Thyroid gland (tissue), 4 donors: ENCODE measurements at regions of chr12 and their contacts with region 1.

Region 1: DNA sequence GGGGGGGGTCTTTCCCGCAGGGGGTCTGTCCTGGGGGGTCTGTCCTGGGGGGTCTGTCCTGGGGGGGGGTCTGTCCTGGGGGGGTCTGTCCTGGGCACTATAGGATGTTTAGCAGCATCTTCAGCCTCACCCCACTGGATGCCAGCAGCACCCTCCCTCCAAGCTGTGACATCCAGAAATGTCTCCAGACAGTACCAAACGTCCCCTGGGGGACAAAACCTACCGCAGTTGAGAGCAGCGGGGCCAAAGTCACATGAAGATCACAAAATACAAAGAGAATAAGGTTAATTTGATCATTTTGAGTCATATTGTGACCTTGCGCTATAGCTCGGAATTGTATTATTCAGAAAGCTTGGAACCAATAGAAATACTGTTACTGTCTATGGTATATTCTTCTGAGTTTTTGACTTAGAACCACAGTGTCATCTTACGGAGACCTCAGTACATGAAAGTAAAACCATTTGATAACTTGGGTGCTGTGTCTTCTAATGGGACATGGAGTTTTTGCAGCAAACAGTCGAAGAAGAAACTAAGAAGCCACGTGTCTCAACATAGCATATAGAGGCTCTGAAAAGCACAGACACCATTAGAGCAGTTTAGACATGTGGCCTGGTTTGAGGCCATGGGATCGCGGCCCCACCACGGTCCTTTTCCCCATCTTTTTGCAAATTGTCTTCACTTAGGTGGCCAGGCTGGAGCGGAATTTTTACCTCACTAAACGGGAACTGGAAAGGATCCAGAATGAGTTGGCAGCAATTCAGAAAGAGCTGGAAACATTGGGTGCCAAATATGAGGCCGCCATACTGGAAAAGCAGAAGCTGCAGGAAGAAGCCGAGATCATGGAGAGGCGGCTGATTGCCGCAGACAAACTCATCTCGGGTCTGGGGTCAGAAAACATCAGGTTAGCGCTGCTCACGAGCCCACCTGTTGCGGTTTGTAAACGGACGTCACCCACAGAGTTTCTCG is 59.9 kb downstream of the CCDC92 start:
- DNase-seq: no peak
- H3K4me3 ChIP-seq: no peak overlapping the region
- H3K27ac ChIP-seq: no peak overlapping the region
- H3K4me1 ChIP-seq: no peaks in the 10 kb centered on the region
- H3K27me3 ChIP-seq: no peaks in the 10 kb centered on the region
- CTCF ChIP-seq: no peak
- POLR2A ChIP-seq: no peak

Region 2: DNA sequence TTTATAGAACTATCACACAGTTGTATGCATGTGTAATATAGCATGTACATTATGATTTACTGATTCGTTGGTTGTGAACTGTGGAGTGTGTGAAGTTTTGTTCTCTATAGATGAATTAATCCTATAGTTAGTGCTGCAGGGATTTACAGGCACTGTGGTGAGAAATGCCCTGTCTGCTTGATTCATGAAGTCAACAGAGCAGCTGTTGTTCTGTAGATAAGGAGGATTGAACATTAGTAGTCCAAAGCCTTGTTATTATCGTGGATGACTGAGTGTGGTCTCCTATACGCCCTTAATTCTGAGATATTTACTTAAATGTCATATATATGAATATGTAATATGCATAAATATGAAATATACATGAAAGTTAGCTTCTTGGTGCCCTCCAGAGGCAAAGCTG is 52.3 kb before region 1 on chr12:
- intact Hi-C with region 1: no loop called
- DNase-seq: no peak
- H3K4me3 ChIP-seq: no peak overlapping the region
- H3K27ac ChIP-seq: no peak overlapping the region
- H3K4me1 ChIP-seq: no peaks in the 10 kb centered on the region
- H3K27me3 ChIP-seq: no peaks in the 10 kb centered on the region
- CTCF ChIP-seq: no peak
- POLR2A ChIP-seq: no peak

Region 3: GRCh38 chr12:124026755-124027745 is 114.4 kb after region 1 on chr12:
- intact Hi-C with region 1: loop called (anchors 5 kb)
- DNase-seq: no peak
- H3K4me3 ChIP-seq: no peak overlapping the region
- H3K27ac ChIP-seq: no peak overlapping the region
- H3K4me1 ChIP-seq: peaks cover 0 to 5% of the 10 kb centered on the region in 2 donors
- H3K27me3 ChIP-seq: no peaks in the 10 kb centered on the region
- CTCF ChIP-seq: no peak
- POLR2A ChIP-seq: no peak